ENCODE measurements at regions of chr3 and their contacts with region 1.

Region 1: DNA sequence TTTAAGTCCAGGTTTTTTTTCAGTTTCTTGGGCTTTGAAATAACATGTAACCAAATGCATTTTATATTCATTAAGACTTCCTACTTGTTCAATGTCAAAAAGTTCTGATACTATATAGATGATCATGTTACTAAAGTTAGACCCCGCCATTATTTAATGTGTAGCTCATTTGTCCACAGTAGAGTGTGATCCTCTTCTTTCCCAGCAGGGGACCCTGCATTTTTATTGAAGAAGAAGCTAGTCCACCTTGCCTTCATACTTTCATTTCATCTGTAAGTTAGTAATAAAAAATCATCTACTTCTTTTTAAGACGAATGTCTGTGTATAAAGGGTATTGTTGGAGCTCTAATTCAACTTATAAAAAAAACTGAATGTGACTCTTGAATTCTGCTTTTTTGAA is 404.6 kb downstream of the SI start:
- DNase-seq: peak; percentile 16
- ATAC-seq: no peak
- H3K4me3 ChIP-seq: no peak overlapping the region
- H3K27ac ChIP-seq: no peak overlapping the region
- H3K4me1 ChIP-seq: no peaks in the 10 kb centered on the region
- H3K27me3 ChIP-seq: no peaks in the 10 kb centered on the region
- CTCF ChIP-seq: peak; percentile 36; the same call in 1 of the 2 replicates

Region 2: GRCh38 chr3:166060789-166061479 is 1387.2 kb after region 1 on chr3:
- CTCF ChIA-PET with region 1: no interaction called
- POLR2A ChIA-PET with region 1: no interaction called
- intact Hi-C with region 1: loop called (anchors 5 kb)
- DNase-seq: no peak
- ATAC-seq: 0 out of 2 replicates have a peak, but pooled peaks have one; percentile 27
- H3K4me3 ChIP-seq: no peak overlapping the region
- H3K27ac ChIP-seq: no peak overlapping the region
- H3K4me1 ChIP-seq: no peaks in the 10 kb centered on the region
- H3K27me3 ChIP-seq: no peaks in the 10 kb centered on the region
- CTCF ChIP-seq: no peak

Region 3: GRCh38 chr3:166104938-166105337 is 1431.2 kb after region 1 on chr3:
- CTCF ChIA-PET with region 1: no interaction called
- POLR2A ChIA-PET with region 1: no interaction called
- intact Hi-C with region 1: no loop called
- DNase-seq: no peak
- ATAC-seq: no peak
- H3K4me3 ChIP-seq: no peak overlapping the region
- H3K27ac ChIP-seq: no peak overlapping the region
- H3K4me1 ChIP-seq: no peaks in the 10 kb centered on the region
- H3K27me3 ChIP-seq: no peaks in the 10 kb centered on the region
- CTCF ChIP-seq: no peak